IMR-90 (cell line): ENCODE measurements at regions of chr3 and their contacts with region 1.

Region 1: GRCh38 chr3:11060500-11061251 is 68.1 kb downstream of the SLC6A1 start:
- DNase-seq: peak; percentile 50
- ATAC-seq: peak; percentile 69
- H3K4me3 ChIP-seq: 0 out of 2 replicates have a peak overlapping the region, but pooled peaks have one; percentile 9
- H3K27ac ChIP-seq: no peak overlapping the region
- H3K4me1 ChIP-seq: peaks cover 4% of the 10 kb centered on the region; the same call in 1 of the 2 replicates
- H3K27me3 ChIP-seq: peaks cover 12% of the 10 kb centered on the region
- CTCF ChIP-seq: peak; percentile 89
- POLR2A ChIP-seq: no peak
- RAD21 ChIP-seq: peak; percentile 92

Region 2: GRCh38 chr3:10883478-10884234 is 177.0 kb before region 1 on chr3:
- CTCF ChIA-PET with region 1: no interaction called
- POLR2A ChIA-PET with region 1: no interaction called
- dilution Hi-C with region 1: no loop called
- in situ Hi-C with region 1: no loop called
- intact Hi-C with region 1: loop called (anchors 10 kb)
- DNase-seq: peak; percentile 3
- ATAC-seq: no peak
- H3K4me3 ChIP-seq: no peak overlapping the region
- H3K27ac ChIP-seq: no peak overlapping the region
- H3K4me1 ChIP-seq: no peaks in the 10 kb centered on the region
- H3K27me3 ChIP-seq: 0 out of 2 replicates have a peak, but pooled peaks cover 1% of the 10 kb centered on the region
- CTCF ChIP-seq: peak; percentile 25; the same call in 1 of the 2 replicates
- POLR2A ChIP-seq: no peak
- RAD21 ChIP-seq: 0 out of 2 replicates have a peak, but pooled peaks have one; percentile 13

Region 3: GRCh38 chr3:11155341-11156025 is 94.8 kb after region 1 on chr3:
- CTCF ChIA-PET with region 1: interaction called, 17 read pairs
- POLR2A ChIA-PET with region 1: no interaction called
- dilution Hi-C with region 1: no loop called
- in situ Hi-C with region 1: no loop called
- intact Hi-C with region 1: loop called (anchors 1 kb)
- DNase-seq: peak; percentile 89
- ATAC-seq: peak; percentile 74
- H3K4me3 ChIP-seq: peak overlapping the region; percentile 78
- H3K27ac ChIP-seq: peak overlapping the region; percentile 54
- H3K4me1 ChIP-seq: peaks cover 15% of the 10 kb centered on the region
- H3K27me3 ChIP-seq: no peaks in the 10 kb centered on the region
- CTCF ChIP-seq: peak; percentile 91
- POLR2A ChIP-seq: peak; percentile 52
- RAD21 ChIP-seq: peak; percentile 88

Region 4: GRCh38 chr3:11335056-11335608 is 274.5 kb after region 1 on chr3:
- CTCF ChIA-PET with region 1: interaction called, 7 read pairs
- POLR2A ChIA-PET with region 1: no interaction called
- dilution Hi-C with region 1: no loop called
- in situ Hi-C with region 1: loop called (anchors 5 kb)
- intact Hi-C with region 1: loop called (anchors 1 kb)
- DNase-seq: peak; percentile 81
- ATAC-seq: peak; percentile 81
- H3K4me3 ChIP-seq: no peak overlapping the region
- H3K27ac ChIP-seq: no peak overlapping the region
- H3K4me1 ChIP-seq: peaks cover 10% of the 10 kb centered on the region
- H3K27me3 ChIP-seq: no peaks in the 10 kb centered on the region
- CTCF ChIP-seq: peak; percentile 82
- POLR2A ChIP-seq: no peak
- RAD21 ChIP-seq: peak; percentile 91